GM12878 (cell line): ENCODE measurements at regions of chr1 and their contacts with region 1.

Region 1: DNA sequence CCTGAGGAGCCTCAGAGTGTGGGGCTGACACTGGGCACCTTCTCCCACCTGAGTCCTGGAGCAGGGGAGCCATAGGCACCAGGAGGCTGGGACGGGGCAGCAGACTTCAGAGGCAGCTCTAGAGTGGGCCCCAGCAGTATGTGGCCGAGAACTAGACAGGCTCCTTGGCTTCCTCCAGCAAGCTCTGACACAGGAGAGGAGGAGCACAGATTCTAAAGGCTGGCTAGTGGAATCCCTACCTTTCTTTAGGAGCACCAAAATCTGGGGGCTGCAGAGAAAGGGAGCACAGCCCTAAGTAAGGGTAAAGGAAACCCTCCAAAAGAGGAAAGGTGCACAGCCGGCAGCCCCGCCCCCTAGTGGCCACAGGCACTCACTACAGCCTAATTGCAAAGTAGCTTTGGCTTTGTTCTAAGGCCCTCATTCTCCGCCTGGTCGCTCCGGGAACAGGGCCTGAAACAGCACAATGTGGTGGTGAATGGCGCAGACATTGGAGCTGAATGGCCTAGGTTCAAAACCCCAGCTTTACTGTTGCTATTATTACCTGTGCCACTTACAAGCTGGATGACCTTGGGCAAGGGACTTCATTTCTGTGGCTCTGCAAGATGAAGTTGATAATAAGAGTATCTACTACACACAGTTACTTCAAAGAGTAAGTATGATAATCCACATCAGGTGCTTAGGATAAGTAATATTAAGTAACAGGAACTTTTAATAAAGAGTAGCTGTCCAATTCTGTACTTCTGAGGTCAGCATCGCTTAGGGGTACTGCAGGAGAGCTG is 8.8 kb upstream of the GUCA2A start:
- DNase-seq: no peak
- ATAC-seq: peak; percentile 86
- H3K4me3 ChIP-seq: no peak overlapping the region
- H3K27ac ChIP-seq: no peak overlapping the region
- H3K4me1 ChIP-seq: no peaks in the 10 kb centered on the region
- H3K27me3 ChIP-seq: no peaks in the 10 kb centered on the region
- CTCF ChIP-seq: peak; percentile 92 to 98 (median 96)
- EP300 ChIP-seq: no peak
- POLR2A ChIP-seq: no peak
- RAD21 ChIP-seq: peak; percentile 73

Region 2: DNA sequence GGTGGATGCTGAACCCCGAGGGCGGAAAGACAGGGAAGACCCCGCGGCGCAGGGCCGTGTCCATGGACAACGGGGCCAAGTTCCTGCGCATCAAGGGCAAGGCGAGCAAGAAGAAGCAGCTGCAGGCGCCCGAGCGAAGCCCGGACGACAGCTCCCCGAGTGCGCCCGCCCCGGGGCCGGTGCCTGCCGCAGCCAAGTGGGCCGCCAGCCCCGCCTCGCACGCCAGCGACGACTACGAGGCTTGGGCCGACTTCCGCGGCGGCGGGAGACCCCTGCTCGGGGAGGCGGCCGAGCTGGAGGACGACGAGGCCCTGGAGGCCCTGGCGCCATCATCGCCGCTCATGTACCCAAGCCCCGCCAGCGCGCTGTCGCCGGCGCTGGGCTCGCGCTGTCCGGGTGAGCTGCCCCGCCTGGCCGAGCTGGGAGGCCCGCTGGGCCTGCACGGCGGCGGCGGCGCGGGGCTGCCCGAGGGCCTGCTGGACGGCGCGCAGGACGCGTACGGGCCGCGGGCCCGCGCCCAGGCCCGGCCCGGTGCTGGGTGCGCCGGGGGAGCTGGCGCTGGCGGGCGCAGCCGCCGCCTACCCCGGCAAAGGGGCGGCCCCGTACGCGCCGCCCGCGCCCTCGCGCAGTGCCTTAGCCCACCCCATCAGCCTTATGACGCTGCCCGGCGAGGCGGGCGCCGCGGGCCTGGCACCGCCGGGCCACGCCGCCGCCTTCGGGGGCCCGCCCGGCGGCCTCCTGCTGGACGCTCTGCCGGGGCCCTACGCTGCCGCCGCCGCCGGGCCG is 791.5 kb before region 1 on chr1:
- CTCF ChIA-PET with region 1: no interaction called
- POLR2A ChIA-PET with region 1: no interaction called
- RAD21 ChIA-PET with region 1: no interaction called
- SMC1A ChIA-PET with region 1: no interaction called
- in situ Hi-C with region 1: no loop called
- intact Hi-C with region 1: no loop called
- DNase-seq: no peak
- ATAC-seq: peak; percentile 10; the same call in 2 of the 3 replicates
- H3K4me3 ChIP-seq: no peak overlapping the region; the same call in 1 of the 2 replicates
- H3K27ac ChIP-seq: no peak overlapping the region
- H3K4me1 ChIP-seq: no peaks in the 10 kb centered on the region
- H3K27me3 ChIP-seq: peaks cover 23 to 34% of the 10 kb centered on the region in 2 experiments
- CTCF ChIP-seq: no peak
- EP300 ChIP-seq: no peak
- POLR2A ChIP-seq: no peak
- RAD21 ChIP-seq: no peak

Region 3: DNA sequence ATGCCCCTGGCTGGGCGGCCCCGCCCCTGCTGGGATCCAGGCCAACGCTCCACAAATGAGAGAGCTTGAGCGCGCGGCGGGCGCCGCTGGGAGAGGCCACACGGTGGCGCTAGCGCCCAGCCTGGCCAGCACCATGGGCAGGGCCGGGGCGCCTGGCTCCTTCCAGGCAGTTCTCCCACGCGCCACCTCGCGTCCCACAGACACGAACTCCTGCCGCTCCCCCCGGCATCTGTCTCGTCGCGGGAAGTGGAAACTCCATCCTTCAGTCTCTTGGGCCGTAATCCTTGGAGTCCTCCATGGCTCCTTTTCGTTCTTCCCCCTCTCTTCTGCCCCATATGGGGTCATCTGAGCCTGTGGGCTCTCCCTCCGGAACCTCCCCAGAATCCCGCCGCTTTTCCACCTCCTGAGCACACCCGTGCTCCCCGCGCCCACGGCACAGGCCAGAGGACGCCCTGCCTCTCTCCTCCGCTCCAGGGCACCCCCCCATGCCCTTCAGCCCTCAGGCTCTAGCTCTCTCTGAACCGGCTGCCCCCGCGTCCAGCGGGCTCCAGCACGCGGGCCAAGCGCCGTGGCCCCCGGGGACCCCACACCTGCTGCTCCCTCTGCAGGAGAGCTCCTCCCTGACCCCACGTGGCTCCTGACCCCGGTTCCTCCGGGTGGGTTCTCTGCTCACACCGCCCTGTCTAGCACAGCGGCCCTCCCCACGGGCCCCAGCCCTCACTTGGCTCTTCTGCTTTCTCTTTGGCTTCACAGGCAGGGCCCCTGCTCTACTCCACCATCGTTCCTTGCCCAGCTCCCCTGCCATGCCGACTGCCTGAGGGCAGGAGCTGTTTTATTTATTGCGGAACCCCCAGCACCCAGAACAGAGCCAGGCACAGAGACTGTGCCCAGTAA is 656.9 kb before region 1 on chr1:
- CTCF ChIA-PET with region 1: interaction called, 23 read pairs
- POLR2A ChIA-PET with region 1: no interaction called
- RAD21 ChIA-PET with region 1: interaction called, 9 read pairs
- SMC1A ChIA-PET with region 1: interaction called, 8 read pairs
- in situ Hi-C with region 1: no loop called
- intact Hi-C with region 1: no loop called
- DNase-seq: no peak
- ATAC-seq: peak; percentile 96
- H3K4me3 ChIP-seq: no peak overlapping the region
- H3K27ac ChIP-seq: no peak overlapping the region; the same call in 1 of the 2 replicates
- H3K4me1 ChIP-seq: peaks cover 6% of the 10 kb centered on the region; the same call in 1 of the 2 replicates
- H3K27me3 ChIP-seq: no peaks in the 10 kb centered on the region
- CTCF ChIP-seq: peak; percentile 86 to 93 (median 90)
- EP300 ChIP-seq: no peak
- POLR2A ChIP-seq: no peak
- RAD21 ChIP-seq: peak; percentile 71

Region 4: GRCh38 chr1:42096554-42096953 is 76.8 kb before region 1 on chr1:
- CTCF ChIA-PET with region 1: no interaction called
- POLR2A ChIA-PET with region 1: no interaction called
- RAD21 ChIA-PET with region 1: no interaction called
- SMC1A ChIA-PET with region 1: no interaction called
- in situ Hi-C with region 1: no loop called
- intact Hi-C with region 1: no loop called
- DNase-seq: no peak
- ATAC-seq: peak; percentile 31; the same call in 1 of the 3 replicates
- H3K4me3 ChIP-seq: no peak overlapping the region
- H3K27ac ChIP-seq: no peak overlapping the region
- H3K4me1 ChIP-seq: no peaks in the 10 kb centered on the region; the same call in 1 of the 2 replicates
- H3K27me3 ChIP-seq: no peaks in the 10 kb centered on the region
- CTCF ChIP-seq: no peak
- EP300 ChIP-seq: no peak
- POLR2A ChIP-seq: no peak
- RAD21 ChIP-seq: no peak

Region 5: DNA sequence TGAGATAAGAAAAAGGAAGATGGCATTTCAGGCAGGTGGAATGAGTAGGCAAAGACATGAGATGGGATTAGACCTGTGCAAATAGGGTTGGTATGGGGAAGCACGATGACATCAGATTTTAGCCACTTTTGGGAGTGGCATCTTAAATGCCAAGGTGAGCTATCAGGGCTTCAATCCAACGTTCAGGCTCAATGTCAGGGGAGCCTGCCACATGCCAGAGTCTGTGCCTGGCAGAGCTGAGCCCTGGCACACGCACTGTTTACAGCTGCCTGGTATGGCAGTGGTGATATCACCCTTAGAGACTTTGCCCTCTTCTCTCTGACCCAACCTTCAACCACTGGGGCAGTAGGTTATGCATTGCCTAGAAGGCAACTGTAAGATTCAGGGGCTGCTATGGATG is 21.2 kb before region 1 on chr1:
- CTCF ChIA-PET with region 1: interaction called, 17 read pairs
- POLR2A ChIA-PET with region 1: no interaction called
- RAD21 ChIA-PET with region 1: interaction called, 8 read pairs
- SMC1A ChIA-PET with region 1: interaction called, 9 read pairs
- in situ Hi-C with region 1: no loop called
- intact Hi-C with region 1: loop called (anchors 2 kb)
- DNase-seq: no peak
- ATAC-seq: no peak
- H3K4me3 ChIP-seq: no peak overlapping the region
- H3K27ac ChIP-seq: no peak overlapping the region
- H3K4me1 ChIP-seq: no peaks in the 10 kb centered on the region
- H3K27me3 ChIP-seq: no peaks in the 10 kb centered on the region
- CTCF ChIP-seq: no peak
- EP300 ChIP-seq: no peak
- POLR2A ChIP-seq: no peak
- RAD21 ChIP-seq: no peak

Region 6: DNA sequence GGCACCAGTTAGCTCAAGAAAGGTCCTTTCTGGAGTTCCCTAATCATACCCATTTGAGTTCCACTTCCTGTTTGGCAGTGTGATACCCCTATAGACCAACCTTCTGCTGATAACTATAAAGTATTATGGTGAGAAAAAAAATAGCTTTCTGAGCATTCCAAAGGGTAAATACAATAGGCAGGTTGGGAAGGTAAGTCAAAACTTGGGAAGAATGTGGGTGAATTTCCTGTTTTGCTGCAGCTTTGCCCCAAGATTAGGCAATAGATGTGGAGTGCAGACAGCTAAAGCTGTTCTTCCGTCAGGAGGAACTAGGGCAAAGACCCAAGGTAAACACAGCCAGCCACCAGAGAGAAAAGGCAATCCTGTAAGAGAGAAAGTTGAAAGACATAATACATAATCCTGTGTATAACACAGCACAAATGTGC is 41.1 kb after region 1 on chr1:
- CTCF ChIA-PET with region 1: interaction called, 13 read pairs
- POLR2A ChIA-PET with region 1: no interaction called
- RAD21 ChIA-PET with region 1: interaction called, 3 read pairs
- SMC1A ChIA-PET with region 1: no interaction called
- in situ Hi-C with region 1: no loop called
- intact Hi-C with region 1: no loop called
- DNase-seq: no peak
- ATAC-seq: 0 out of 3 replicates have a peak, but pooled peaks have one; percentile 48
- H3K4me3 ChIP-seq: 0 out of 2 replicates have a peak overlapping the region, but pooled peaks have one; percentile 10
- H3K27ac ChIP-seq: no peak overlapping the region
- H3K4me1 ChIP-seq: no peaks in the 10 kb centered on the region
- H3K27me3 ChIP-seq: no peaks in the 10 kb centered on the region
- CTCF ChIP-seq: no peak
- EP300 ChIP-seq: no peak
- POLR2A ChIP-seq: no peak
- RAD21 ChIP-seq: no peak

Region 7: DNA sequence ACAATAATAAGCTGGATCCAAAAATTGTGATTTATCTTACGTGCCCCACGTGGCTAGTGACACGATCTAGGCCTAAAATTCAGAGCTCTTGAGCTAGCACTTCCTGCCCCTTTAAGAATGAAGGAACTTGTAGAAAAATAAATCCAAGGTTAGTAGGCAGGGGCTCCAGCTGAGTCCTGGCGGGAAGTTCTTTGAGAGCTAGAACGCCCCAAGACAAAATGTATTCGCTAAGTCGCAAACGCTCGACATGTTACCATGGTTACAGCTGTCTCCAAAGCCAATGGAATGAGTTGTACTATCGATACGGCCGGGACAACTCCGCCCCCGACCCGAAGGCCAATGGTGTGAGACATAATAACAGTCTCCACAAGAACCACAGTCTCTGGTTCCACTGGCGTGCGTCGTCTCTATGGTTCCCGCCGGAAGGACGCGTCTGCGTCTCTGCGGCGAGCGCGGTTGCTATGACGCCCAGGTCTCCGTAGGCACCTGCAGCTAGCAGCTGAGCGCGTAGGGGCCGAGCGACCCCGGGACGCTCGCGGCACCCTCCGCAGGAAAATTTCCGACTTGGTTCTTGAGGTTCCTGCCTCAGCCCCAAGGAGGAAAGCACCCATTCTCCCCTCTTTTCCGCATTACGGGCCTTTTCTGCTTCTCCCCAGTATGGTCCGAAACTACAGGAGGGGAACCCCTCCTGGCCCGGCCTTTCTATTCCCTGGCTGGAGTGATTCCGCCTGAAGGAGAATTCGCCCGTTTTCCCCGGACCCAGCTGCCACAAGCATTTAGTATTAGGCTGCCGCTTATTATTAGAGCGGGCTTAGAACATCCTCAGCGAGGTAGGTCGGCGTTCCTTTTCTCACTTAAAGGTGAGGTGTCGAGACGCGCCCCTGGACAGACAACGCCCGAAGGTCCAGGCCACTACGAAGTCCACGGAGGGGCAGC is 289.8 kb after region 1 on chr1 and contains the start of gene CCDC30:
- CTCF ChIA-PET with region 1: interaction called, 3 read pairs
- POLR2A ChIA-PET with region 1: interaction called, 4 read pairs
- RAD21 ChIA-PET with region 1: no interaction called
- SMC1A ChIA-PET with region 1: no interaction called
- in situ Hi-C with region 1: no loop called
- intact Hi-C with region 1: loop called (anchors 10 kb)
- DNase-seq: peak; percentile 93
- ATAC-seq: peak; percentile 100
- H3K4me3 ChIP-seq: peak within 1 kb of the TSS; percentile 71
- H3K27ac ChIP-seq: peak within 1 kb of the TSS; percentile 19; the same call in 1 of the 2 replicates
- H3K4me1 ChIP-seq: peaks cover 5% of the 10 kb centered on the region; the same call in 1 of the 2 replicates
- H3K27me3 ChIP-seq: no peaks in the 10 kb centered on the region
- CTCF ChIP-seq: no peak
- EP300 ChIP-seq: no peak
- POLR2A ChIP-seq: peak; percentile 45
- RAD21 ChIP-seq: no peak
- polyA plus RNA-seq, gene CCDC30: 0.64 to 1.3 TPM